ENCODE measurements at regions of chr9 and their contacts with region 1.

Region 1: GRCh38 chr9:95425910-95426551 is 90.7 kb downstream of the PTCH1 start:
- DNase-seq: peak; percentile 33
- H3K4me3 ChIP-seq: peak overlapping the region; percentile 21 to 52 (median 38)
- H3K27ac ChIP-seq: peak overlapping the region; percentile 75 to 87 (median 86)
- H3K4me1 ChIP-seq: peaks cover 8 to 15% (median 8%) of the 10 kb centered on the region in 4 donors
- H3K27me3 ChIP-seq: no peaks in the 10 kb centered on the region
- CTCF ChIP-seq: no peak
- EP300 ChIP-seq: no peak
- POLR2A ChIP-seq: no peak

Region 2: DNA sequence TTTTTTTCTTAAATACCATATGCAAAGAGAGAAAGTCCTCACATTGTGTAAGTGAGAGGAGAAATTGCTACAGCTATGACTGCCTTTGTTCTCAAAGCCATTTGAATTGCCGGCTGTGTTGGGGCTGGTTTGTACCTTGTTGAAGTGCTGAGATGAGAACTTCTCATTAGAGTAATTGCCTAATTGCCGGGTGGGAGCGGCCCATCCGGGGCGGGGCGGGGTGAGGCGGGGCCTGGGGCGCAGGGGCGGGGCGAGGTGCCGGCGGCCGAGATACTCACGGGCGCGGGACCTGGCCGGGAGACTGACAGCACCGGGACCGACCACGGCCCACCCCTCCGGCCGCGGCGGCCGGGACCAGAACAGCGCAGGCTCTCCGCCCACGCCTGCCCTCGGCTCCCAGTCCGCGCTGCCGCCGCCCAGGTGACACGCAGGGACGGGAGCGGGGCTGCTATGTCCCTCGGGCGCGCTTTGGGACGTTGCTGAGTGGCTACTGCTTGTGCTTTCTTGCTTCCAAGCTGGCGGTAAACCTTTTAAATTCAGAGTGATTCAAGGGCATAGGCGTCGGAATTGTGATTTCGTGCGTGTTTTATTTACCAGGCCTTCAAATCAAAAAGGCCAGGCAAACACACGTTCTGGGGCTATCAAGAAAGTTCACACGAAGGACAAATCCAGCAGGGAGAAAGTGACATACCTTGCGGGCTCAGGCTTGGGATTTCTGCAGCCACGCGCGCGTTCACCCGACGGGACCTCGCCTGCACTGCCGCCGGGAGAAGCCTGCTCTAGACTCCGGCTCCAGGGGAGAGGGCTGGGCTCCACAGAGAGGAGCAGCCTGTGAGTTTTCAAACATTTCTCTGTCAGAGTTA is 377.6 kb before region 1 on chr9:
- in situ Hi-C with region 1: no loop called
- intact Hi-C with region 1: no loop called
- DNase-seq: peak; percentile 82
- H3K4me3 ChIP-seq: peak overlapping the region; percentile 24 to 63 (median 46)
- H3K27ac ChIP-seq: peak overlapping the region; percentile 85 to 92 (median 90)
- H3K4me1 ChIP-seq: peaks cover 5 to 66% (median 37%) of the 10 kb centered on the region in 4 donors
- H3K27me3 ChIP-seq: no peaks in the 10 kb centered on the region
- CTCF ChIP-seq: no peak
- EP300 ChIP-seq: no peak
- POLR2A ChIP-seq: peak; percentile 39

Region 3: GRCh38 chr9:95206143-95206542 is 219.9 kb before region 1 on chr9:
- in situ Hi-C with region 1: no loop called
- intact Hi-C with region 1: no loop called
- DNase-seq: no peak
- H3K4me3 ChIP-seq: no peak overlapping the region
- H3K27ac ChIP-seq: no peak overlapping the region
- H3K4me1 ChIP-seq: peaks cover 0 to 9% (median 3%) of the 10 kb centered on the region in 4 donors
- H3K27me3 ChIP-seq: no peaks in the 10 kb centered on the region
- CTCF ChIP-seq: no peak
- EP300 ChIP-seq: no peak
- POLR2A ChIP-seq: no peak

Region 4: GRCh38 chr9:95363051-95363841 is 62.8 kb before region 1 on chr9:
- in situ Hi-C with region 1: no loop called
- intact Hi-C with region 1: loop called (anchors 10 kb)
- DNase-seq: no peak
- H3K4me3 ChIP-seq: no peak overlapping the region
- H3K27ac ChIP-seq: no peak overlapping the region
- H3K4me1 ChIP-seq: no peaks in the 10 kb centered on the region
- H3K27me3 ChIP-seq: peaks cover 5% of the 10 kb centered on the region
- CTCF ChIP-seq: no peak
- EP300 ChIP-seq: no peak
- POLR2A ChIP-seq: no peak

Region 5: GRCh38 chr9:95499847-95500246 is 73.8 kb after region 1 on chr9:
- in situ Hi-C with region 1: no loop called
- intact Hi-C with region 1: loop called (anchors 1 kb)
- DNase-seq: no peak
- H3K4me3 ChIP-seq: no peak overlapping the region
- H3K27ac ChIP-seq: peak overlapping the region in 2 of 4 donors; percentile 32 to 57
- H3K4me1 ChIP-seq: peaks cover 0 to 6% (median 3%) of the 10 kb centered on the region in 4 donors
- H3K27me3 ChIP-seq: no peaks in the 10 kb centered on the region
- CTCF ChIP-seq: no peak
- EP300 ChIP-seq: no peak
- POLR2A ChIP-seq: no peak